A673 (cell line): ENCODE measurements at regions of chr10 and their contacts with region 1.

Region 1: GRCh38 chr10:83332690-83333089 is 806.6 kb upstream of the GHITM start:
- DNase-seq: no peak
- H3K4me3 ChIP-seq: no peak overlapping the region
- H3K27ac ChIP-seq: no peak overlapping the region
- H3K4me1 ChIP-seq: no peaks in the 10 kb centered on the region
- H3K27me3 ChIP-seq: no peaks in the 10 kb centered on the region
- CTCF ChIP-seq: no peak

Region 2: DNA sequence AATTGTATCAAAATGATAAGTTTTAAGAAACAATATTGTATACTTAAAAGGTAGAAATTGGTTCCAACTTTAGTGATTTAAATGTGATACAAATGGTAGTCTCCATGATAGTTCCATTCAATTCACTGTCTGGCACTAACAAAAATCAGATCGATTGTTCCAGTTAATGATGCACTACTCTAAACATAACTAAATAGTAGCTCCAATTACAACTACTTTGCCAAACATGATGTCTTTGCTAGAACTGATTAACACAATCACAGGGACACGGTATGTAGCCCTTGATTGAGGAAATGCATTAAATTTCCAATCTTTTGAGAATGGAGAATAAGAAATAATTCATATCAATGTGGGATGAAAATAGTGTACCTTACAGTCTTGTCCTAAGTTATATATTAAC is 155.8 kb before region 1 on chr10:
- CTCF ChIA-PET with region 1: no interaction called
- POLR2A ChIA-PET with region 1: no interaction called
- intact Hi-C with region 1: no loop called
- DNase-seq: no peak
- H3K4me3 ChIP-seq: no peak overlapping the region
- H3K27ac ChIP-seq: no peak overlapping the region
- H3K4me1 ChIP-seq: no peaks in the 10 kb centered on the region
- H3K27me3 ChIP-seq: no peaks in the 10 kb centered on the region
- CTCF ChIP-seq: no peak

Region 3: GRCh38 chr10:83272666-83273434 is 59.8 kb before region 1 on chr10:
- CTCF ChIA-PET with region 1: no interaction called
- POLR2A ChIA-PET with region 1: no interaction called
- intact Hi-C with region 1: loop called (anchors 10 kb)
- DNase-seq: no peak
- H3K4me3 ChIP-seq: no peak overlapping the region
- H3K27ac ChIP-seq: no peak overlapping the region
- H3K4me1 ChIP-seq: no peaks in the 10 kb centered on the region
- H3K27me3 ChIP-seq: no peaks in the 10 kb centered on the region
- CTCF ChIP-seq: no peak